Activated B cell treated with CpG ODN at 0.5 μM for 24 hours (primary cell): ENCODE measurements at regions of chr5 and their contacts with region 1.

Region 1: GRCh38 chr5:54229041-54229780 is 81.2 kb downstream of the ARL15 start:
- DNase-seq: peak; percentile 47
- ATAC-seq: peak; percentile 89
- H3K4me3 Mint-ChIP-seq: peak overlapping the region; percentile 1
- H3K27ac Mint-ChIP-seq: no peak overlapping the region
- H3K4me1 Mint-ChIP-seq: peaks cover 31% of the 10 kb centered on the region
- H3K27me3 Mint-ChIP-seq: no peaks in the 10 kb centered on the region
- CTCF ChIP-seq: no peak

Region 2: DNA sequence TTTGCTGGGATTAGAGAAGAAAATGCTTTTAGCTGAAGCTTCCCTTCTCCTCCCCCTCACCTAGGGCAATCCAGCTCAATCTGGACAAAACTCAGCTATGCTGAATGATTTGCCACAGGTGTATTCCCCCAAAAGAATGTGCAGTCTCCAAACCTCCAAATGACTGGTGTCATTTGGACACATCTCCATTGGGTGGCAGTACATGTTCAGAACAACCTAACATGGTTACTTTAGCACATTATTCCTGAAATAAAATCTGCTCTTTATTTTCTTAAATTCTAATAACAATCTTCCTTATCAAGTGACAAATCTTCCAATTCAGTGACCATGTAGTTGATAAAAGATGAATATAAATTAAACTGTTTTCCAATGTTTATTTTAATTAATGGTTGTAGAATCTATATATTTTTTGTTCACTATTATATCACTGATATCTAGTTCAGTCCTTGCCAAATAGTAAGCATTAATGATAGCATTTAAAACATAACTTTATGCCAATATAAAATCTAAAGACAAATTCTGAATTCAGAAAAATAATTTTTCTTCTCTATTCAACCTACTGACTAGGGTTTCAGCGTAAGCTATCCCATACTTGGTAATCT is 1058.4 kb before region 1 on chr5:
- CTCF ChIA-PET with region 1: interaction called, 5 read pairs
- POLR2A ChIA-PET with region 1: no interaction called
- intact Hi-C with region 1: loop called (anchors 1 kb)
- DNase-seq: no peak
- ATAC-seq: no peak
- H3K4me3 Mint-ChIP-seq: no peak overlapping the region
- H3K27ac Mint-ChIP-seq: no peak overlapping the region
- H3K4me1 Mint-ChIP-seq: no peaks in the 10 kb centered on the region
- H3K27me3 Mint-ChIP-seq: peaks cover 6% of the 10 kb centered on the region
- CTCF ChIP-seq: no peak

Region 3: DNA sequence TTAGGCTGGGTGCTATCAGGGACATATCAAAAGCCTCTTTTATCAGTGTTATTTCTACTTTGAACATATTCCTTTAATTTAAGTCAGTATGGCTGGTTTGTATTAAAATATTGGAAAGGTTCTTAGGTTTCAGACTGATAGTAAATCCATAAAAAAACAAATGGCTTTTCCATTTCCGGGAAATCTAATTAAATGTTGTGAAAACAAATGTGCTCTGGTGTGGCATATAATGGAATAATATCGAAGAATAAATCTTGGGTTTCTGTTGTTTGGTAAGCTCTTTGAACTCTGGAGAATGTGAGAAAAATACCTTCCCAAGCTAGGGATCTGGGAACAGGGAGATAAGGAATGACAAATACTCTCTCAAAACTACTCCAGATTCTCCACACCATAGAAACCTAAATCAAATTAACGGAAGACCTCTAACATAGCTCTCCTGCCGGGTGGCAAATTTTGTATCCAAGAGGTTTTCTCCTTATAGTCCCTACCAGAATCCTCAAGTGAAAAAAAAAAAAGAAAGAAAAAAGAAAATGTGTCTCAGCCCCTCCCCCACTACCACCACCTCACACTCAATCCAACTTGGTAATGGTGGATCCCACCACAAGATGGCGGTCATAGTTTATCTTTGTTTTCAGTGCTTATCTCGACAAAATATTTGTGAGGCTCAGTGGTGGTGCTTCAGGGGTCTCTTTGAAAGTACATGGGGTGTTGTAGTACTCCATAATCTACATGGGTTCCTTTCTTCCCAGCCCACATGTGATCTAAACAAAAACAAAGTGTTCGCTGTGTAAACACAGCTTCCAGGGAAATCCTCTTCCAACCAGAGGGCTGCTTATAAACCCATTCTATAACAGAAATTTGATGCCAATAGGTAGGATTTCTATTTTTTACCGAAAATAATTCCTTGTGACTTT is 803.4 kb before region 1 on chr5:
- CTCF ChIA-PET with region 1: no interaction called
- POLR2A ChIA-PET with region 1: no interaction called
- intact Hi-C with region 1: loop called (anchors 2 kb)
- DNase-seq: no peak
- ATAC-seq: no peak
- H3K4me3 Mint-ChIP-seq: no peak overlapping the region
- H3K27ac Mint-ChIP-seq: no peak overlapping the region
- H3K4me1 Mint-ChIP-seq: no peaks in the 10 kb centered on the region
- H3K27me3 Mint-ChIP-seq: peaks cover 7% of the 10 kb centered on the region
- CTCF ChIP-seq: no peak

Region 4: GRCh38 chr5:53560506-53561191 is 668.6 kb before region 1 on chr5 and contains the start of gene NDUFS4:
- CTCF ChIA-PET with region 1: no interaction called
- POLR2A ChIA-PET with region 1: no interaction called
- intact Hi-C with region 1: loop called (anchors 10 kb)
- DNase-seq: peak; percentile 50
- ATAC-seq: peak; percentile 93
- H3K4me3 Mint-ChIP-seq: peak within 1 kb of the TSS; percentile 100
- H3K27ac Mint-ChIP-seq: peak within 1 kb of the TSS; percentile 94
- H3K4me1 Mint-ChIP-seq: peaks cover 37% of the 10 kb centered on the region
- H3K27me3 Mint-ChIP-seq: peaks cover 14% of the 10 kb centered on the region
- CTCF ChIP-seq: no peak
- total RNA-seq, gene NDUFS4: 35.6 and 40.9 TPM in 2 replicates

Region 5: GRCh38 chr5:54480296-54480695 is 251.1 kb after region 1 on chr5:
- CTCF ChIA-PET with region 1: no interaction called
- POLR2A ChIA-PET with region 1: no interaction called
- intact Hi-C with region 1: loop called (anchors 5 kb)
- DNase-seq: no peak
- ATAC-seq: no peak
- H3K4me3 Mint-ChIP-seq: no peak overlapping the region
- H3K27ac Mint-ChIP-seq: no peak overlapping the region
- H3K4me1 Mint-ChIP-seq: no peaks in the 10 kb centered on the region
- H3K27me3 Mint-ChIP-seq: peaks cover 27% of the 10 kb centered on the region
- CTCF ChIP-seq: no peak